Mammary epithelial cell (primary cell): ENCODE measurements at regions of chr2 and their contacts with region 1.

Region 1: DNA sequence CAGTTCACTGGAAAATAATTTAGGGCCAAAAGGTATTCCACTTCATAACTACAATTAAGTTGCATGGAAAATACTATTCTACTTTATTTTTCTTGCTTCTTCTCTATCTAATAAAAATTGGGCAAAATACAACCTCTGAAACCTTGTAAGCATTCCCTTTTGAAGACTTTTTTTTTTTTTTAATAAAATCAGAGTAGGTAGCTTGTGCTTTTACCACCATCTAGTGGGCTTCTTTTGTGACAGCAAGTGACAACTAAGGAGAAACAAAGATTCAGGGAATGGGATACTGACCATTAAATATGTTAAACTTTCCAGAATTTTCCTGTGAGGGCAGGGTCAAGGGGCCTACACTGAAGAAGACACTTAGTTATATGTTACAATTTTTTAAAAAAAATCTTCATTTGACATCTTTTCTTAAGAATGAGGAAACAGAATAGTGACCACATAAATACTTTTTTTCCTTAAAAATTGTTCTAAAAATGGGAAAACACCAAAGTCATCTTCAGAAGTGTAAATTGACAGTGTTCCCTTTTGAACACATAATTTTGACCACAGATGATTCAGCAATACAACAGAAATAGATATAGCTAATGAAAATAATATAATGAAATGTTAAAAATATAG is 1183.2 kb upstream of the ACVR2A start:
- DNase-seq: peak; percentile 13
- H3K4me3 ChIP-seq: no peak overlapping the region
- H3K27ac ChIP-seq: no peak overlapping the region
- H3K4me1 ChIP-seq: no peaks in the 10 kb centered on the region
- H3K27me3 ChIP-seq: no peaks in the 10 kb centered on the region
- CTCF ChIP-seq: peak; percentile 70

Region 2: GRCh38 chr2:145599756-145600155 is 1061.8 kb before region 1 on chr2:
- CTCF ChIA-PET with region 1: no interaction called
- dilution Hi-C with region 1: no loop called
- in situ Hi-C with region 1: no loop called
- intact Hi-C with region 1: no loop called
- DNase-seq: no peak
- H3K4me3 ChIP-seq: no peak overlapping the region
- H3K27ac ChIP-seq: no peak overlapping the region
- H3K4me1 ChIP-seq: no peaks in the 10 kb centered on the region
- H3K27me3 ChIP-seq: no peaks in the 10 kb centered on the region
- CTCF ChIP-seq: no peak

Region 3: DNA sequence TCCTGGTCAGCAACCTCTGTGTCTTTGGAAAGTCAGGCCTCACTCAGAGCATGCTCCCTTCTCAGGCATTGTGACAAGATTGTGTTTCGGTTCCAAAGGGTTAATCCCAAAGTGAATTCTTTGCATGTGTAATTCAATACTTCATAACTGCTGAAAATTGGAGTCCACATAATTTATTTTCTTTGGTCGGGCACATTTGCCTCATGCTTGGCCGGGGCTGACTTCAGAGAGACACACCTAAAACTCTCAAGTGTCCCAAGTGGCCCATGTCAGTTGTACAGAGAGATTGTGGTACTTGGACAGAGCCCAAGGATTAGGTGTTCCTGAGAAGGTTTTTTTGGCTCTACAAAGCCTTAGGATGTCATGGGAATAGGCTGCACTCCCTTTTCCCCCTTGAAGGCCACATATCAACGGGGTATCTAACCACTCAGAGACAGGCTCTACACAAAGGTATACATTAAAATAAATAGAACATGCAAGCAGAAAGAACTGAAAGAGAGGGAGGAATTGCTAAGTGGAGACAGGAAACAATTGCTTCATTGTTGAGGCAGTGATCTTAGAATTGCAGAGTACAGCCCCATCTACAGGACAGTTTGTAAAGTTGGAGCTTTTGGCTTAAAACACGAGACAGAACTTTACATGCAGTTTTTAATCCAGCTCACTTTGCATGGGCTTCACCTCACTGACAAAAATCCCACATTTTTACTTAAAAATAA is 909.3 kb before region 1 on chr2:
- CTCF ChIA-PET with region 1: no interaction called
- dilution Hi-C with region 1: no loop called
- in situ Hi-C with region 1: no loop called
- intact Hi-C with region 1: loop called (anchors 10 kb)
- DNase-seq: peak; percentile 65
- H3K4me3 ChIP-seq: no peak overlapping the region
- H3K27ac ChIP-seq: no peak overlapping the region
- H3K4me1 ChIP-seq: peaks cover 14% of the 10 kb centered on the region
- H3K27me3 ChIP-seq: no peaks in the 10 kb centered on the region
- CTCF ChIP-seq: peak; percentile 73 to 77

Region 4: DNA sequence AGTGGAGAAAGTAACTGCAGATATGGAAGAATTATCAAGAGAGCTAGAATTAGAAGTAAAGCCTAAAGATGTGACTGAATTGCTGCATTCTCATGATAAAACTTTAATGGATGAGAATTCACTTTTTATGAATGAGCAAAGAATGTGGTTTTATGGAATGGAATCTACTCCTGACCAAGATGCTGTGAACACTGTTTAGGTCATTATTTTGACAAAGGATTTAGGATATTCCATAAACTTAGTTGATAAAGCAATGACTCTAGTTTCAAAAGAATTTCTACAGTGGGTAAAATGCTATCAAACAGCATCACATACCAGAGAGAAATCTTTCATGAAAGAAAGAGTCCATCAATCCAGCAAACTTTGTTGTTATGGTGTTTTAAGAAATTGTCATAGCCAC is 134.4 kb before region 1 on chr2:
- CTCF ChIA-PET with region 1: no interaction called
- dilution Hi-C with region 1: no loop called
- in situ Hi-C with region 1: no loop called
- intact Hi-C with region 1: loop called (anchors 5 kb)
- DNase-seq: no peak
- H3K4me3 ChIP-seq: no peak overlapping the region
- H3K27ac ChIP-seq: no peak overlapping the region
- H3K4me1 ChIP-seq: no peaks in the 10 kb centered on the region
- H3K27me3 ChIP-seq: peaks cover 7% of the 10 kb centered on the region
- CTCF ChIP-seq: no peak

Region 5: DNA sequence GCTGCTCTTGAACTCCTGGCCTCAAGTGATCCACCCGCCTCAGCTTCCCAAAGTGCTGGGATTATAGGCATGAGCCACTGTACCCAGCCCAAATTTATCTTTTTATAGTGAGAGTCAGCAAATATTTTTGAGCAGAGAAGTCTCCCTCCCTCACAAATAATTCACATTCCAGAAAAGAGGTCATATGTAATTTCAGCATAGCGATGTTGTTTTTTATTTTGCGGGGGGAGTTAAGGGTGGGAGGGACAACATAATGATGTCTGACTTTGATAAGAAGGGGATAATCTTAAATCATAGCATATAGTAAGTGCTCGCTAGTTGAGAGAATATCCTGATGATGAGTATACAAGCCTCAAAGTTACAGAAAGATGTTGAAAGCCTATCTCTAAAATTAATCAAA is 93.0 kb after region 1 on chr2:
- CTCF ChIA-PET with region 1: no interaction called
- dilution Hi-C with region 1: no loop called
- in situ Hi-C with region 1: no loop called
- intact Hi-C with region 1: no loop called
- DNase-seq: no peak
- H3K4me3 ChIP-seq: no peak overlapping the region
- H3K27ac ChIP-seq: no peak overlapping the region
- H3K4me1 ChIP-seq: no peaks in the 10 kb centered on the region
- H3K27me3 ChIP-seq: no peaks in the 10 kb centered on the region
- CTCF ChIP-seq: no peak

Region 6: DNA sequence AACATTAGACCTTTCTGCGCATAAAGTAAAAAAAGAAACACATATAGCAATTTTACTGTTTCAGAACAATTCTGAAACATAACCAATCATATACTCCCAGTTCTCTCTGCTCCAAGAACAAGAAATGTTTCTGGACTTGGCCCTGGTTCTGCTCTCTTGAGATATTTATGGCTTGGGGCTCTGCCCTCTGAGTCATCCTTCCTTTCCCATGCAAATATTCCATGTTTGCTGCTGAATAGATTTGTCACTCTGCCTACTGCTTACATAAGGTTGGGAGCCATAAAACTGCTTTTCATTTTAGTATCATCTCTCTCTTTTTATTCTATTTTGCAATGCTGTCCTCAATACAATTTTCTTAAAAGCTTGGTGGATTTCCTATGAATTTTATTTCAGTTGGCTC is 683.7 kb after region 1 on chr2:
- CTCF ChIA-PET with region 1: no interaction called
- dilution Hi-C with region 1: no loop called
- in situ Hi-C with region 1: no loop called
- intact Hi-C with region 1: no loop called
- DNase-seq: peak; percentile 56
- H3K4me3 ChIP-seq: no peak overlapping the region
- H3K27ac ChIP-seq: no peak overlapping the region
- H3K4me1 ChIP-seq: peaks cover 4% of the 10 kb centered on the region
- H3K27me3 ChIP-seq: no peaks in the 10 kb centered on the region
- CTCF ChIP-seq: no peak